Heart right ventricle (tissue), 16 donors: ENCODE measurements at regions of chr2 and their contacts with region 1.

Region 1: GRCh38 chr2:73071360-73072133 is at the start of gene SFXN5:
- DNase-seq: peak; percentile 99
- ATAC-seq: peak; percentile 95 to 98 (median 97)
- H3K4me3 ChIP-seq: peak within 1 kb of the TSS; percentile 69 to 98 (median 94)
- H3K27ac ChIP-seq: peak within 1 kb of the TSS; percentile 79 to 99 (median 93)
- H3K4me1 ChIP-seq: peaks cover 10 to 44% (median 25%) of the 10 kb centered on the region in 9 donors
- H3K27me3 ChIP-seq: no peaks in the 10 kb centered on the region
- CTCF ChIP-seq: peak in 7 of 9 donors; percentile 12 to 58 (median 35)
- total RNA-seq, gene SFXN5: 7.3 to 11.8 (median 10.0) TPM

Region 2: DNA sequence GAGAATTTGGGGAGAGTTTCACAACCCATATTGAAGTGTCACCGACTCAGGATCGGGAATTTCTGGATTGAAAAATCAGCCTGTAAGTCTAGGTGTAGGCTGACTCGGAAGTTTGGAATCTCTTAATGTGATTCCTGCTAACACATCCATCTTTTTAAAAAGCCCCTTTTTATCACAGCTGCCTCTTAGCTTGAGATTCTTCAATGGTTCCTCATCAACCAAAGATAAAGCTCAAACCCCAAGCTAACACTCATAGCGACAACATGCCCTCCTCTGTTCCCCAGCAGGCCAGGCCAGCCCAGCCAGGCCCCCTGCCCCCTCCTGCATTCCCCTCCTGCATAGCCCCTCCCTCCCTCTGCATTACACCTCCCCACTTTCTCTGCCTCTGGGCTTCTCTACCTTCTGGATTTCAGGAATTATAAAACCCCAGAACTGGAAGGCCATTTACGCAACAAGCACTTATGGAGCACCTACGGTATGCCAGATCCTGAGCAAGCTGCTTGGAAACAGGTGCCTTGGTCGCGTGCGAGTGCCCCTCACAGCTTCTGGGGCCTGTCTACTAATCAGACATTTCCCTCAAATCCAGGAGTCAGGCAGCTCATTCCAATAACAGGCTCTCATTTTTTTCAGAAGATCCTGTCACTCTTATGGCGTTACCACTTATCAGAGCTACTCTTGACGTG is 90.9 kb before region 1 on chr2:
- intact Hi-C with region 1: loop called in 2 of 10 experiments (anchors 2 to 5 kb)
- DNase-seq: no peak
- ATAC-seq: no peak
- H3K4me3 ChIP-seq: no peak overlapping the region
- H3K27ac ChIP-seq: peak overlapping the region in 5 of 10 donors; percentile 10 to 41 (median 19)
- H3K4me1 ChIP-seq: peaks cover 12 to 57% (median 38%) of the 10 kb centered on the region in 9 donors
- H3K27me3 ChIP-seq: no peaks in the 10 kb centered on the region
- CTCF ChIP-seq: no peak

Region 3: DNA sequence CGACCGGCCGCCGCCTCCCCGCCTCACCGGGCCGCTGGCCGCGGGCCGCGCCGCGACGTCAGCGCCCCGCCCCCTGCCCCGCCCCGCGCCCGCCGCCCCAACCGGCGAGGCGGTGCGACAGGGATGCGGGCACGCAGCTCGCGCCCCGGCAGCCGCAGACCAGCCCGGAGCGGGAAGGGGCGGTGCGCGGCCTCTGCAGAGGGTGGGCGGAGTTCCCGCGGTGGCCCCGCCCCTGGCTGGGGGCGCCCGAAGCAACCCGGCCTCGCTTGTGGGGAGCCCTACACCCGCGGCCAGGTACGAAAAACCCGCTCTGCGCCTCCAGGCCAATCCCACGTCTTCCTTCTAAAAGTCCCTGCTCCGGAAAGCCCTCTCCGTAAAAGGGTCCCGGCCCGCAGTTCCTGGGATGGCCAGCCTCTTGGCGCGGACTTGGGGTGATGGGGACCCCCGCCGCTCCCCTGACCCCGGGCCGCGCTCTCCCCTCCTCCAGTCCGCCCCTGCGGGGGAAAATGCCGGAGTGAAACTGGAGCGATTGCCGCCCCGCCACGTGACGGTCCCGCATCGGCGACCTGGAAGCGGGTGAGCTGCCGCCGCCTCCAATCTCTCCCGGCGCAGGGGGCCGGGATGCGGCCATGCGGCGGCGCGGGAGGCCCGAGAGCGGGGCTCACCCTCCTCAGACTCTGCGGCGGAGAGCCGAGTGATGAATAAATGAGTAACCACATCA is 41.5 kb after region 1 on chr2 and contains the start of gene RAB11FIP5:
- intact Hi-C with region 1: loop called in 1 of 10 experiments (anchors 5 kb)
- DNase-seq: peak; percentile 61 to 81
- ATAC-seq: peak; percentile 69 to 86 (median 80)
- H3K4me3 ChIP-seq: peak within 1 kb of the TSS; percentile 68 to 99 (median 88)
- H3K27ac ChIP-seq: peak within 1 kb of the TSS in 9 of 10 donors; percentile 70 to 89 (median 84)
- H3K4me1 ChIP-seq: peaks cover 18 to 48% (median 37%) of the 10 kb centered on the region in 9 donors
- H3K27me3 ChIP-seq: peaks cover 0 to 23% (median 0%) of the 10 kb centered on the region in 7 donors
- CTCF ChIP-seq: peak in 1 of 9 donors; percentile 18
- total RNA-seq, gene RAB11FIP5: 16.3 to 30.4 (median 22.3) TPM

Region 4: GRCh38 chr2:73233154-73233931 is 161.8 kb after region 1 on chr2 and contains the start of gene PRADC1:
- intact Hi-C with region 1: no loop called
- DNase-seq: peak; percentile 95 to 99
- ATAC-seq: peak; percentile 91 to 97 (median 96)
- H3K4me3 ChIP-seq: peak within 1 kb of the TSS; percentile 70 to 95 (median 88)
- H3K27ac ChIP-seq: peak within 1 kb of the TSS; percentile 88 to 98 (median 94)
- H3K4me1 ChIP-seq: peaks cover 2 to 47% (median 35%) of the 10 kb centered on the region in 9 donors
- H3K27me3 ChIP-seq: no peaks in the 10 kb centered on the region
- CTCF ChIP-seq: no peak
- total RNA-seq, gene PRADC1: 61.2 to 96.5 (median 76.6) TPM